ENCODE measurements at regions of chr17 and their contacts with region 1.

Region 1: GRCh38 chr17:49556223-49556971 is 19.3 kb upstream of the NXPH3 start:
- DNase-seq: peak; percentile 84
- H3K4me3 Mint-ChIP-seq: no peak overlapping the region
- H3K27ac Mint-ChIP-seq: no peak overlapping the region
- H3K4me1 Mint-ChIP-seq: peaks cover 5% of the 10 kb centered on the region
- H3K27me3 Mint-ChIP-seq: peaks cover 15% of the 10 kb centered on the region

Region 2: DNA sequence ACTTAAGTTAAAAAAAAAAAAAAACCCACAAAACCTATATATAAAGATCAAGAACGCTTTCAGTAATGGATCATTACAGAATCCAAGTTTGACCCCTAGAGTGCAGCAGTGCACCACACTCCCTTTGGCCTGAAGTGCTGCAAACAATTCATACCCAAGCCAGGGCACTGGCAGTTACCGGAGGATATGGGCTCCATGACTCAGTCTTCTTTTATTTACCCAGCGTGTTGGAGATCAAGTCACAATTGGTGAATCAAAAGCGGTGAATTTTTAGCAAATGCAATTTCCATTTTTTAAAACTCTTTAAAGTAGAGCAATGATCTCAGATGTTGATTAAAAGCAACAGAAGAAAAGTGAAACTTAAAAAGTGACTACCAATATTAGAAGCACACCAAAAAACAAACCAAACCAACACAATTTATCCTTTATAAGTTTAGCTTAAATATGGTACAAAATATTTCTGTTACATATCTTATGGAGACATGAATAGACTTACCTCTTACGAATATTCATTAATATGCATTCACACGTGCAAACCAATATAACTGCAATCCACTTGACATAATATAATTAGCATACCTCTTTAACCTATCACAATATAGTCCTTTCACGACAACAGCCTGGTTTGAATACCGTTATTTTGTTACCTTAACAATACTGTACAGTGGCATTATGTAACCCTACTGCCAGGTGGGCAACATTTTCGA is 240.7 kb before region 1 on chr17:
- CTCF ChIA-PET with region 1: interaction called, 11 read pairs
- POLR2A ChIA-PET with region 1: no interaction called
- DNase-seq: peak; percentile 84
- H3K4me3 Mint-ChIP-seq: peak overlapping the region; percentile 41
- H3K27ac Mint-ChIP-seq: peak overlapping the region; percentile 79
- H3K4me1 Mint-ChIP-seq: peaks cover 33% of the 10 kb centered on the region
- H3K27me3 Mint-ChIP-seq: no peaks in the 10 kb centered on the region

Region 3: GRCh38 chr17:49414622-49415350 is 141.6 kb before region 1 on chr17 and contains the start of gene PHB1:
- CTCF ChIA-PET with region 1: interaction called, 144 read pairs
- POLR2A ChIA-PET with region 1: interaction called, 3 read pairs
- DNase-seq: peak; percentile 97
- H3K4me3 Mint-ChIP-seq: peak within 1 kb of the TSS; percentile 95
- H3K27ac Mint-ChIP-seq: peak within 1 kb of the TSS; percentile 70
- H3K4me1 Mint-ChIP-seq: peaks cover 23% of the 10 kb centered on the region
- H3K27me3 Mint-ChIP-seq: peaks cover 5% of the 10 kb centered on the region
- total RNA-seq, gene PHB1: 103 to 105 TPM

Region 4: GRCh38 chr17:49434821-49435670 is 121.4 kb before region 1 on chr17:
- CTCF ChIA-PET with region 1: interaction called, 84 read pairs
- POLR2A ChIA-PET with region 1: interaction called, 3 read pairs
- DNase-seq: peak; percentile 41
- H3K4me3 Mint-ChIP-seq: no peak overlapping the region
- H3K27ac Mint-ChIP-seq: no peak overlapping the region
- H3K4me1 Mint-ChIP-seq: no peaks in the 10 kb centered on the region
- H3K27me3 Mint-ChIP-seq: peaks cover 41% of the 10 kb centered on the region

Region 5: GRCh38 chr17:49445591-49445990 is 110.8 kb before region 1 on chr17:
- CTCF ChIA-PET with region 1: no interaction called
- POLR2A ChIA-PET with region 1: no interaction called
- DNase-seq: no peak
- H3K4me3 Mint-ChIP-seq: no peak overlapping the region
- H3K27ac Mint-ChIP-seq: no peak overlapping the region
- H3K4me1 Mint-ChIP-seq: peaks cover 7% of the 10 kb centered on the region
- H3K27me3 Mint-ChIP-seq: peaks cover 26% of the 10 kb centered on the region

Region 6: DNA sequence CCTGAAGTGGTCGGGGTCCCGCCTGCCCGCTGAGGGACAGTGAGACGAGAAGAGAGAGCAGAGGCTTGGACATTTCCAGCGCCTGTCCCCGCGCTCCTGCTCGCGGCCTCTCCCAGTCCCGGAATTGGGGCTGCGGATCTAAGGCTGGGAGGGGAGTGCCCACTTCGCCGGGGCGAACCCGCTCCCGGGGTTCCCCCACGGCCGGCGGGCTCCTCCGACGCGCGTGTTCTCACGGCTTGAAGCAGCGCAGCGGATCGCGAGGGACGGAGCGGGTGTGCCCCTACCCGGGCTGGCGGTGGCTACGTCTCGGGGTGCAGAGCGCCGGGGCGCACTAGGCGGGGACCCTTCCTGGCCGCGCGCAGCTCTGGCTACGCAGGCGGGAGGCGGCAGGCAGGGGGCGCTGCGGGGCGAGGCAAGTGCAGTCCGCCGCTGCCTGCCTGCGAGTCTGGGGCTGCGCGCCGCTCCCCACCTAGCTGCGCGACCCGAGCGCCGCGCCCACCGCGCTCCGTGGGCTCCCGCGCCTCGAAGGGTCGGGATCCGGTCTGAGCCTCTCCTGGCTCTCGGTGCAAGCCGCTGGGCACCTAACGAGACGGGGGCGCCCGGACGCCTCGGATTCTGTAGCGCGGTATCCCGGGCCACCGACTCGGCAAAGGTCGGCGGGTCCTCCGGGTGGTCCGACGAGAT is 60.1 kb before region 1 on chr17:
- CTCF ChIA-PET with region 1: interaction called, 23 read pairs
- POLR2A ChIA-PET with region 1: no interaction called
- DNase-seq: peak; percentile 84
- H3K4me3 Mint-ChIP-seq: peak overlapping the region; percentile 57
- H3K27ac Mint-ChIP-seq: no peak overlapping the region
- H3K4me1 Mint-ChIP-seq: peaks cover 24% of the 10 kb centered on the region
- H3K27me3 Mint-ChIP-seq: peaks cover 75% of the 10 kb centered on the region

Region 7: DNA sequence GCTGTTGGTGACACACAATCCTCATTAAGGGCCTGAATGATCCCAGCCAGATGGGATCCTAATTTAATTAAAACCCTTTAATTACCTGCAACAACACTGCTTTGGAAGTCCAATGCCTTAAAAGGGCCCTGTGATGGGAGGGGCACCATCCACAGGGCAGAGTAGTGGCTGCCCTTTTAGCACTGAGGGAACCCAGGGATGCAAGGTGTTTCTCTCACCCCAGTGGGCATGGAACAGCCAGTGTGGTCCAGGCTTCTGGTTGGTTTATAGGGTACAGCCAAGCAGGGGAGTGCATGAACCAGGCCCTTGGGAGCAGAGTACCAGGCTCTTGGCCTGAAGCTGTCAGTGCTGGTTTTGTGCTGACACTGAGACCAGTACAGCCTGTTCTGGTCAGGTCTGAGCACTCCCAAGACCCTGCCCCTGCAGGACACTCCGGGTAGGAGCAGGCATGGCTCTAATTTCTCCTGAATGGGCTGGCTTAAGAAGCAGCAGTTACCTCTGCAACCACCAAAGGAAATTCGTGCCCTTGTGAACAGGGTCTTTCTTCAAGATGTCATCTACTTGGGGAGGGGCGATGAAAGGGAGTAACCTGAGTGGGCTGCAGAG is 29.1 kb after region 1 on chr17:
- CTCF ChIA-PET with region 1: no interaction called
- POLR2A ChIA-PET with region 1: no interaction called
- DNase-seq: no peak
- H3K4me3 Mint-ChIP-seq: no peak overlapping the region
- H3K27ac Mint-ChIP-seq: no peak overlapping the region
- H3K4me1 Mint-ChIP-seq: no peaks in the 10 kb centered on the region
- H3K27me3 Mint-ChIP-seq: no peaks in the 10 kb centered on the region

Region 8: DNA sequence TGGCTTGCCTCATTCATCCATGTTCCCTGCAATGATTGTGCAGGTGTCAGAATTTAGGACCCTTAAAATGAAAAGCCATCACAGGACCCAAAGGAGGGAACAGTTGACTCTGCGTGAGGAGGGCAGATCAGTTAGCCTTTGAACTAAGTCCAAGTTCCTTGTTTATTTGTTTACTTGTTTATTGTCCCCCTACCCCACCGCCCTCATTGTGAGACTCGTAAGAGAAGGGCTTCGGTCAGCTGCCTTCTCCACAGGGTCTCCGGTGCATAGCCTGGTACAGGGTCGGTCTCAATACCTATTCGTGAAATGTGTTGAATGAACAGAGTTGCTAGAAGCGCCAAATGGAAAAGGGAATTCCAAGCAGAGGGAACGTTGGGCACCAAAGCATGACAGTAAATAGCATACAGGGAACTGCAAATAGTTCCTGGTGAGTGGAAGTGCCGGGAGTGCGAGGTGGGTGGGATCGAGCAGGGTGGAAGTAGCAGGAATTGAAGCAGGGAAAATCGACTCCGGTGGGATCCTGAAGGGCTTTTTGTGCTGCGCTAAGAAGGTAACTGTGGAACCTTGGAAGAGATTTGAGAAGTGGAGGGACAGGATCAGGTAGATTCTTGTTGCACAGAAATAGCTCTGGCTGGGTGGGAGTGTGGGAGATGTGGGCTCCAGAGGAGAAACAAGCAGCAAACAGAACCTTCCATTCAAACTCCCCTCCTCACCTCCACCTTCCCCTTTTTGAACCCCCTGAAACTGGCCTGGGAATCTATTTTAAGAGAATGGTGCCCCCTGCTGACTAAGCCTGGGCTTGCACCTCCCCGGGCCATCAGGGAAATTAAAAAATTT is 138.7 kb after region 1 on chr17:
- CTCF ChIA-PET with region 1: interaction called, 12 read pairs
- POLR2A ChIA-PET with region 1: interaction called, 4 read pairs
- DNase-seq: peak; percentile 75
- H3K4me3 Mint-ChIP-seq: no peak overlapping the region
- H3K27ac Mint-ChIP-seq: peak overlapping the region; percentile 77
- H3K4me1 Mint-ChIP-seq: peaks cover 25% of the 10 kb centered on the region
- H3K27me3 Mint-ChIP-seq: no peaks in the 10 kb centered on the region

Region 9: DNA sequence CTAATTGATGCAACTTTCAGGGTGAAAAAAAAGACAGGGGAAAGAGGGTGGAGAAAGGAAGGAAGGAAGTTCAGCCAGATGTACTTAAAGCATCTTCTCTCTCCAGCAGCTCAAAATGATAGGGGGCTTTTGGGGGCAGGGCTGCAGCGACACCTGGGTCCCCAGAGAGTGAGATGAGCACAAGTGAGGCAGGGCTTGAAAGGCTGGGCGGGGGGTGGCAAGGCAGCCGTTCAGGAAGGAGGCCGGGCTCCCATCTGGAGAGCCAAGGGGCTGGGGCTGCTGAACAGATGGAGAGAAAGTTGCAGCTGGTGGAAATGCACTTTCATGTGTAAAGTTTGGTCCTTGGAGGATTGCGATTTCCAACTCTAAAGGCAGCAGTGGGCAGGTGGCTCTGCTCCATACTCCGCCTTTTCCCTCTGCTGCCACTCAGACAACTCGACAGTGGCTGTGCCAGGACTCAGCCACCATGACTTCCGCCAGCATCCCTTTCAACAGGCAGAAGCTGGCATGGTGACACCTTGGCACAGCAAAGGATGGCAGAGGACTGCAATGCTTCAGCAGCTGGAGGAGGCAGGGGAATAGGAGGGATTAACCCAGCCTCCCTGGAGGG is 143.7 kb after region 1 on chr17:
- CTCF ChIA-PET with region 1: interaction called, 12 read pairs
- POLR2A ChIA-PET with region 1: interaction called, 4 read pairs
- DNase-seq: no peak
- H3K4me3 Mint-ChIP-seq: no peak overlapping the region
- H3K27ac Mint-ChIP-seq: no peak overlapping the region
- H3K4me1 Mint-ChIP-seq: peaks cover 35% of the 10 kb centered on the region
- H3K27me3 Mint-ChIP-seq: no peaks in the 10 kb centered on the region